PC-9 (cell line): ENCODE measurements at regions of chr4 and their contacts with region 1.

Region 1: GRCh38 chr4:99462875-99463464 is 27.8 kb upstream of the ADH7 start:
- DNase-seq: peak; percentile 44 to 63
- H3K4me3 ChIP-seq: no peak overlapping the region
- H3K27ac ChIP-seq: no peak overlapping the region
- H3K4me1 ChIP-seq: peaks cover 14% of the 10 kb centered on the region
- H3K27me3 ChIP-seq: no peaks in the 10 kb centered on the region
- CTCF ChIP-seq: peak; percentile 91

Region 2: GRCh38 chr4:98150092-98150761 is 1312.7 kb before region 1 on chr4:
- CTCF ChIA-PET with region 1: no interaction called
- POLR2A ChIA-PET with region 1: interaction called, 3 read pairs
- intact Hi-C with region 1: loop called (anchors 2 kb)
- DNase-seq: no peak
- H3K4me3 ChIP-seq: no peak overlapping the region
- H3K27ac ChIP-seq: no peak overlapping the region
- H3K4me1 ChIP-seq: peaks cover 17% of the 10 kb centered on the region
- H3K27me3 ChIP-seq: no peaks in the 10 kb centered on the region
- CTCF ChIP-seq: peak; percentile 61

Region 3: DNA sequence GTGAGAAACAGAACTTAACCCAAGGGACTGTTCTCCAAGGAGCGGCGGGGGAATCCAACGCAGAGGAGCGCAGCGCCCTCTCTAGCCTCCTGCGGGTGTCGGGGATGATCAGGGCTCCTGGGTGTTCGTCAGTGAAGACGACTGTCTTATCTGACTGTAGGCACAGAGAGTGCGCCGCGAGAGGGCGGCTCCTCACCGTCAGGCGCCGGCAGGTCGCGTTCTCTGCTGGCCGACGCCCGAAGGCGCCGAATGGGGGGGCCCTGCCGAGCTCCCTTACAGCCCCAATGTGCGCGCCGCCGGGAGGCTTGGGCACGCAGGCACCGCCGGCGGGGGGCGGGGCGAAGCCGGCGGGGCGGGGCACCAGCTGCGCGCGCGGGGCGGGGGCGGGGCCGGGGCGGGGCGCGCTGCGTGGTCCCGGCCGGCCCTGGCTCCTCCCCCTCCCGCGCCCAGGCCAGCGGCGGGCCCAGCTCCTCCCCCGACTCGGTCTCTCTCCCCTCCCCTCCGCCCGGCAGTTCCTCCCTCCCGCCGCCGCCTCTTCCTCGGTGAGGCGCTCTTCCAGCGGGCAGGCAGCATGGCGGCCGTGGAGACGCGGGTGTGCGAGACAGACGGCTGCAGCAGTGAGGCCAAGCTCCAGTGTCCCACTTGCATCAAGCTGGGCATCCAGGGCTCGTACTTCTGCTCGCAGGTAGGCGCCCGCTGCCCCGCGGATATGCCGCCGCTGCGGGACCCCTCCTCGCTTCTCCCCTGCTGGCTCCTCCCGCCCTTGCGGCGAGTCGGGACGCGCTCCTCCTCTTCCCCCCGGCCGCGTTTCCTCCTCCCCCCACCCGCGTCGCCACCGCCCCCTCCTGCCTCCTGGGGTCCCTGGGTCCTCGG is 467.6 kb before region 1 on chr4 and contains the start of gene METAP1:
- CTCF ChIA-PET with region 1: no interaction called
- POLR2A ChIA-PET with region 1: no interaction called
- intact Hi-C with region 1: loop called (anchors 2 kb)
- DNase-seq: peak; percentile 88 to 92
- H3K4me3 ChIP-seq: peak within 1 kb of the TSS; percentile 65
- H3K27ac ChIP-seq: peak within 1 kb of the TSS; percentile 55
- H3K4me1 ChIP-seq: peaks cover 28% of the 10 kb centered on the region
- H3K27me3 ChIP-seq: no peaks in the 10 kb centered on the region
- CTCF ChIP-seq: peak; percentile 55
- total RNA-seq, gene METAP1: 36.7 and 42.0 TPM in 2 replicates

Region 4: GRCh38 chr4:99078931-99079624 is 383.9 kb before region 1 on chr4:
- CTCF ChIA-PET with region 1: no interaction called
- POLR2A ChIA-PET with region 1: no interaction called
- intact Hi-C with region 1: no loop called
- DNase-seq: no peak
- H3K4me3 ChIP-seq: no peak overlapping the region
- H3K27ac ChIP-seq: no peak overlapping the region
- H3K4me1 ChIP-seq: no peaks in the 10 kb centered on the region
- H3K27me3 ChIP-seq: no peaks in the 10 kb centered on the region
- CTCF ChIP-seq: no peak

Region 5: GRCh38 chr4:99117876-99118693 is 344.9 kb before region 1 on chr4:
- CTCF ChIA-PET with region 1: interaction called, 7 read pairs
- POLR2A ChIA-PET with region 1: no interaction called
- intact Hi-C with region 1: loop called (anchors 1 kb)
- DNase-seq: no peak
- H3K4me3 ChIP-seq: no peak overlapping the region
- H3K27ac ChIP-seq: no peak overlapping the region
- H3K4me1 ChIP-seq: no peaks in the 10 kb centered on the region
- H3K27me3 ChIP-seq: no peaks in the 10 kb centered on the region
- CTCF ChIP-seq: peak; percentile 68

Region 6: DNA sequence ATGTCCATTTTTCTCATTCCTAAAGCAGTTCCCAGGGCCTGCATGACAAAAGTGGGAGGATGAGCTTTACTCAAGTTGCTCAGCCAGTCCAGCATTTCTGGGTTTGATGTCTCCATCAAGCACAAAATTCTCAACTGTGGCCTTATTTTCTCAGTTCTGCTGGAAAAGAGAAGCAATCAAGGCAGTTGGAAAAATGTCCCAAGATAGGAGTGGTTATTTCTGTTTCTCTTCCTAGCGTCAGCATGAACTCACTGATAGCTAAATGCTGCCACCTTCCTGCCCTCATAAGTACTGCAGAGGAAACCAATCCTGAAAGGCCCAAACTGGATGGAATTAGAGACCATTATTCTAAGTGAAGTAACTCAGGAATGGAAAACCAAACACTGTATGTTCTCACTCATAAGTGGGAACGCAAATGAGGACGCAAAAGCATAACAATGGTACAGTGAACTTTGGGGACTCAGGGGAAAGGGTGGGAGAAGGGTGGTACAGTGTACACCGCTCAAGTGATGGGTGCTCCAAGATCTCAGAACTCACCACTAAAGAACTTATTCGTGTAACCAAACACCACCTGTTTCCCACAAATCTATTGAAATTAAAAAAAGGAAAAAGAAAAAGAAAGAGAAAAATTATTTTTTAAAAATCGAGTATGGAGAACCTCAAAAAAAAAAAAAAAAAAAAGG is 57.4 kb before region 1 on chr4:
- CTCF ChIA-PET with region 1: interaction called, 3 read pairs
- POLR2A ChIA-PET with region 1: no interaction called
- intact Hi-C with region 1: loop called (anchors 2 kb)
- DNase-seq: peak; percentile 51 to 54
- H3K4me3 ChIP-seq: no peak overlapping the region
- H3K27ac ChIP-seq: 0 out of 2 replicates have a peak overlapping the region, but pooled peaks have one; percentile 21
- H3K4me1 ChIP-seq: peaks cover 12% of the 10 kb centered on the region
- H3K27me3 ChIP-seq: no peaks in the 10 kb centered on the region
- CTCF ChIP-seq: peak; percentile 93